K562 (cell line): ENCODE measurements at regions of chr11 and their contacts with region 1.

Region 1: DNA sequence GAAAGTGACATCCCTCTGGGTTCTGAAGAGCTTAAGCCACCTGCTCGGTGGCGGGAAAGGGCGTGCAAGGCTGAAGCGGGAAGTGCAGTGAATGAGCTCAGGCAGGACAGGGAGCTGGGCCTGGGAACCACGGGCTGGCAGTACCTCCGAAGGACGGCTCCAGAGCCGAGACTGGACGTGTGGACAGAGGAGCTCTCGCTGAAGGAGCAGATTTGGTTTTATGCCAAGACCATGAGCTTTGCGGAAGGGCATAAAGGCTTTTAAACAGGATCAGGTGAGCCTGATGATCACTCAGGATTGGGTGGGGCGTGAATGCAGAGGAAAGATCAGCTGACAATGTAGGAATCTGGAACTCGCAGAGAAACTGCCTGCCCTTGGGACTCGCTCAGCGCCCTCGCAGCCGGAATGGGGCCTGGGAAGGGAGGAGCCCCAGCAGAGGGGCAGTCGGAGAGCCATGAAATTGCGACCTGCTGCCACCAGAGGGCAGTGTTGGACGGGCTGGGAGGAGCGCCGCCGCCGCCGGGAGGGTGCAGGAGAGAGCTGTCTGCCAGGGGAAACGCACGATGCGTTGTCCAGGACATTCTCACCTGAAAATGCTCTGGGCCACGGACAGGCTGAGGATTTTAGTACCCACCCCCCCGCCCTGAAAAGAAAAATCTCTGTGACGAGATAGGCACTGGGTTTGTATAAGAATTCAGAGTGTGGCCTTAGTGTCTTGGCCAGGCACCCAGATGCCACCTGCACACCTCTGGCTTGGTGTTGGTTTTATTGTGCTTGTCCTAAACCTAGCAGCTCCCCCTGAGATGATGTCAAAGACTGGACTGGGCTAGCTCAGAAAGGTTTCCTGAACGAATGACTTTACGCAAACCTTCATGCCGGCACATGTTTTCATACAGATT is 324.4 kb downstream of the NTM start:
- DNase-seq: peak; percentile 72 to 83 (median 76)
- ATAC-seq: peak; percentile 94
- H3K4me3 ChIP-seq: no peak overlapping the region
- H3K27ac ChIP-seq: no peak overlapping the region
- H3K4me1 ChIP-seq: peaks cover 0 to 9% of the 10 kb centered on the region in 2 experiments; a peak in 1 of 5 replicates
- H3K27me3 ChIP-seq: no peaks in the 10 kb centered on the region
- CTCF ChIP-seq: peak; percentile 81 to 99 (median 95)
- EP300 ChIP-seq: no peak
- POLR2A ChIP-seq: no peak
- RAD21 ChIP-seq: peak in 1 of 2 experiments; percentile 57; a peak in 2 of 4 replicates

Region 2: GRCh38 chr11:132028380-132029240 is 333.8 kb after region 1 on chr11:
- CTCF ChIA-PET with region 1: no interaction called
- POLR2A ChIA-PET with region 1: no interaction called
- in situ Hi-C with region 1: no loop called
- intact Hi-C with region 1: loop called (anchors 5 kb)
- DNase-seq: peak in 3 of 4 experiments; percentile 11 to 14 (median 12)
- ATAC-seq: no peak
- H3K4me3 ChIP-seq: no peak overlapping the region
- H3K27ac ChIP-seq: no peak overlapping the region
- H3K4me1 ChIP-seq: no peaks in the 10 kb centered on the region
- H3K27me3 ChIP-seq: no peaks in the 10 kb centered on the region
- CTCF ChIP-seq: 0 out of 6 replicates have a peak, but pooled peaks of 2 of the 3 experiments have one; percentile 12 to 26
- EP300 ChIP-seq: no peak
- POLR2A ChIP-seq: no peak
- RAD21 ChIP-seq: no peak

Region 3: GRCh38 chr11:132330515-132330914 is 635.7 kb after region 1 on chr11:
- CTCF ChIA-PET with region 1: no interaction called
- POLR2A ChIA-PET with region 1: no interaction called
- in situ Hi-C with region 1: no loop called
- intact Hi-C with region 1: no loop called
- DNase-seq: no peak
- ATAC-seq: no peak
- H3K4me3 ChIP-seq: no peak overlapping the region
- H3K27ac ChIP-seq: no peak overlapping the region
- H3K4me1 ChIP-seq: no peaks in the 10 kb centered on the region
- H3K27me3 ChIP-seq: no peaks in the 10 kb centered on the region
- CTCF ChIP-seq: no peak
- EP300 ChIP-seq: no peak
- POLR2A ChIP-seq: no peak
- RAD21 ChIP-seq: no peak

Region 4: DNA sequence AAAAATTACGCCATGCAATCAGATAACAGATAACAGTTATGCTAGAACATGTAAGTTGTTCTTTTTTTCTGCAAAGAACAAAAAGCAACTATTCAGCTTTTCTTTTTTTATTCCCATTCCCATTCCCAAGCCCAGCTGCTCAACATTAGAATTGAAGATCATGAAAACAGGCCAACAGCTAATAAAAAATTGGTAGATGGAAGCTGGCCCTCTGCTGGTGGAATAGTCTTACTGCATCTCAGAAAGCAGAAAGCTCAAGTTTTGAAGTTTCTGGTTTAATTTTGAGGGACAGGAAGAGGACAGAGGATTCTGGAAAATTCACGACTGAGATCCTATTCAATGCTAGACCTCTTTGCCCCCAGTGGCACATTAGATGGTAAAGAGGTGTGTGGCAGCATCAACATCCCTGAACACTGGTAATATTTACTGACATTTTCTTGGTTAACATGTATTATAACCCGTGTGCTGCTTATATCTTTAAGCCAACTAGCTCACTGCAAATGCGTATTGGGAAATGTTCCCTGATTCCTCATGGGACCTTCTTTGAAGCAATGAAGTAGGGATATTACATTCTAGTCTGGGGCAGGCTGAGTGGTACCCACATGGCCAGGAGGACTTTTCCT is 1246.4 kb after region 1 on chr11:
- CTCF ChIA-PET with region 1: no interaction called
- POLR2A ChIA-PET with region 1: no interaction called
- in situ Hi-C with region 1: no loop called
- intact Hi-C with region 1: loop called (anchors 5 kb)
- DNase-seq: peak; percentile 6 to 33 (median 24)
- ATAC-seq: no peak
- H3K4me3 ChIP-seq: no peak overlapping the region
- H3K27ac ChIP-seq: no peak overlapping the region
- H3K4me1 ChIP-seq: no peaks in the 10 kb centered on the region
- H3K27me3 ChIP-seq: no peaks in the 10 kb centered on the region
- CTCF ChIP-seq: peak; percentile 23 to 66 (median 64); a peak in 5 of 6 replicates
- EP300 ChIP-seq: no peak
- POLR2A ChIP-seq: no peak
- RAD21 ChIP-seq: peak; percentile 40 to 51

Region 5: DNA sequence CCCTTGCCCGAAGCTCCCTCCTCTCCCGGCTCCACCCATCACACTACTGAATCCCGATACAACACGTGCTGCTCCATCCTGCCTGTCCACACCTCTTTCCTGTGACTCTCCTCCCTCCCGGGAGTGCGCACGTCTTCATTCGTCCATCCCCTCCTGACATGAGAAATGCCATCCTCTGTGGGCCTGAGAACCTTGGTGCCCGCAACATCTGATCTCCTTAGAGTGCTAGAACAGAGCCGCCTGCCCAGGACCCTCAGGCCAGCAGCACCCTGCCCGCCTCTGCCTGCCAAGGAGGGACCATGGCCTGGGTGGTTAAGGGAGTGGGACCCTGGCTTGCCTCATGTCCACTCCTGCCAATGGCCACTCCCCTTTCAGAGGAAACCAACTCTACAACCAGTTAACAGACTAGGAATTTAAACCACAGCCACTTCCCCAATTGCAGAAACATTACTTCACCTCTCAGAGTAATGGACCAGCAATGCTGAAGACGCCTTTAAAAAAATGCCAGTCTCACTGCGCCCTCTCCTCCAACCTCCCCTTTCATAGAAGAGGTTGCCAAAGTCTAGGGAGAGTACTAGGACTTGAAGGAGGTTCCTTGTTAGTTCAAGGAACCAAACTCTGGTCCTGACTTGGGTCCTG is 1371.2 kb after region 1 on chr11:
- CTCF ChIA-PET with region 1: no interaction called
- POLR2A ChIA-PET with region 1: no interaction called
- in situ Hi-C with region 1: no loop called
- intact Hi-C with region 1: loop called (anchors 5 kb)
- DNase-seq: no peak
- ATAC-seq: no peak
- H3K4me3 ChIP-seq: no peak overlapping the region
- H3K27ac ChIP-seq: no peak overlapping the region
- H3K4me1 ChIP-seq: peaks cover 0 to 6% of the 10 kb centered on the region in 2 experiments; a peak in 1 of 5 replicates
- H3K27me3 ChIP-seq: peaks cover 0 to 8% of the 10 kb centered on the region in 2 experiments; a peak in 2 of 5 replicates
- CTCF ChIP-seq: no peak
- EP300 ChIP-seq: no peak
- POLR2A ChIP-seq: no peak
- RAD21 ChIP-seq: no peak